SK-N-SH (cell line): ENCODE measurements at regions of chr11 and their contacts with region 1.

Region 1: DNA sequence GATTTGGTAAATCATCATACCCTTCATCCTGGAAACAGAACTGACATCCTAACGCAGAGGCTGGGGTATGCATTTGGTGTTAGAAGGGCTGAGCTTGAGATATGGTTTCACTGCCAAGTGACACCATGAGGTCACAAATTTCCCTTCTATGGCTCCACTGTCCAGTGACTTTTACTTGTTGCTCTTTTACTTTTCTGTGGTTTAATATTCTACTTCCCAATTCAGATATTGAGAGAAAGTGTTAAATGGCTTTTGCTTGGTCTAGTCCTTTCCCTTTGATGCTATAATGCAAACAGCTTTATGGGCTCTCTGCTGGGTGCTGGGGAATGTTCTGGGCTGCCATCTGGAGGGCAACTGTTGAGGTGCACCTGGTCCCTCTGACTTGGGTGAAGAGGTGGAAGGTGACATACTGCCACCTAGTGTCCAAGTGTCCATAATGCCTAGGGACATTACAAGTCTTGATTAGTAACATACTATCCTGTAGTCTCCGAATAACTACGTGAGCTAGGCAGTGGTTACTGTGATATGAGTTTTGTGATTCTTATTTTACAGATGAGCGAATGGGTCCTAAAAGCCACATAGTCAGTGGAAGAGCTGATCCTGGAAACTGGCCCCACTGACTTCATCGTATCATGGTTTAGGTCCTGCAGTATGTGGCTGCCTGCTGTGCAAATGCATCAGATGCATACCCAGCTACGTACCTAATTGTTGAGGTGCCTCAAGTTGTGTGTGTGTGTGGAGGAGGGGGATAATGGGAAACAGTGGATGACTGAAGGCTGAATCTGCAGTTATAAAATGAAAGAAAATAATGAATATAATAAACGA is 149.1 kb upstream of the RAG2 start:
- DNase-seq: peak; percentile 76
- H3K4me3 ChIP-seq: peak overlapping the region in 1 of 2 experiments; percentile 39; a peak in 1 of 4 replicates
- H3K27ac ChIP-seq: peak overlapping the region in 1 of 2 experiments; percentile 67; a peak in 2 of 4 replicates
- H3K4me1 ChIP-seq: peaks cover 13 to 18% of the 10 kb centered on the region in 2 experiments
- H3K27me3 ChIP-seq: no peaks in the 10 kb centered on the region
- CTCF ChIP-seq: peak; percentile 99
- EP300 ChIP-seq: no peak
- RAD21 ChIP-seq: peak; percentile 97

Region 2: GRCh38 chr11:36583667-36584066 is 163.4 kb before region 1 on chr11:
- CTCF ChIA-PET with region 1: interaction called, 13 read pairs
- POLR2A ChIA-PET with region 1: no interaction called
- DNase-seq: no peak
- H3K4me3 ChIP-seq: no peak overlapping the region
- H3K27ac ChIP-seq: no peak overlapping the region
- H3K4me1 ChIP-seq: peaks cover 6 to 8% of the 10 kb centered on the region in 2 experiments; a peak in 3 of 4 replicates
- H3K27me3 ChIP-seq: no peaks in the 10 kb centered on the region
- CTCF ChIP-seq: no peak
- EP300 ChIP-seq: no peak
- RAD21 ChIP-seq: no peak

Region 3: DNA sequence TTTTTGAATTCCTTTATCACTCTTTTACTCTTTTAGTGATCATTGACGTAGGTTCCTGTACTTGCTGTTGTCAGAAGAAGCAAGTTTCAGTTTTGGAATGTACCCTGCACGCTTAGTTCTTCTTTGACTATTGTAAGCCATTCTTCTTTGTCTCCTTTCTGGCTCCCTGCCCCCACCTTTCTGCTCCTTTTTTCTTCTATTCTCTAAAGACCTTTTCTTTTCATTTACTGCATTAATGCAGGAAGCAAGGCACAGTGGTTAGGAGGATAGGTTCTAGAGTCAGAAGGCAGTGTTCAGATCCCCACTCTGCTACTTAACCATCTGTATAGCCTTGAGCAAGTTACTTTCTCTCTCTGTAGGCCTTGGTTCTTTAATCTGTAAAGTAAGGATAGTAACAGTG is 115.3 kb before region 1 on chr11:
- CTCF ChIA-PET with region 1: interaction called, 19 read pairs
- POLR2A ChIA-PET with region 1: no interaction called
- DNase-seq: no peak
- H3K4me3 ChIP-seq: no peak overlapping the region
- H3K27ac ChIP-seq: peak overlapping the region in 1 of 2 experiments; percentile 99; a peak in 2 of 4 replicates
- H3K4me1 ChIP-seq: peaks cover 0 to 37% of the 10 kb centered on the region in 2 experiments; a peak in 2 of 4 replicates
- H3K27me3 ChIP-seq: no peaks in the 10 kb centered on the region
- CTCF ChIP-seq: no peak
- EP300 ChIP-seq: no peak
- RAD21 ChIP-seq: no peak

Region 4: DNA sequence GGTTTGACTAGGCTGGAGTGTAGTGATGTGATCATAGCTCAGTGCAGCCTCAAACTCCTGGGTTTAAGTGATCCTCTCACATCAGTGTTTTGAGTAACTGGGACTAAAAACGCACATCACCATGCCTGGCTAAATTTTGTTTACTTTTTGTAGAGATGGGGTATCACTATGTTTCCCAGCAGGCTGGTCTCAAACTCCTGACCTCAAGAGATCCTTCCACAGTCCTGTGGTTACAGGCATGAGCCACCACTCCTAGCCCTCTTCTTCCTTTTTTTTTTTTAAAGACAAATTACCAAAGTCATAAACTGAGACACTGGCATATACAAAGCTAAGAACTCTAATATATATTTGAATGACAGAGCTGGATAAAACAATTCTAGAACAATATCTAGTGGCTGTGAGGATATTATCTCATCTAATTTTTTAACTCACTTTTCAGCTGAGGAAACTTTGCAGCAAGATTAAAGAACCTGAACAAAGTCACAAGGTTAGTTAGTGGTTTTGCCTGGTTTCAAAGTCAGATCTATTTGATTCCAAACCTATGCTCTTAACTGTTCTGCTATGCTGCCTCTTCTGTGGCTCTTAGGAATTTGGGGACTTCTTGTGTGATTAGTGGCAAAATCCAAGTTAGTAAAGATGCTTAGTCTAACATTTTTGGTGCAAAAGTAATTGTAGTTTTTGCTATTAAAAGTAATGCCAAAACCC is 53.8 kb before region 1 on chr11:
- CTCF ChIA-PET with region 1: interaction called, 290 read pairs
- POLR2A ChIA-PET with region 1: no interaction called
- DNase-seq: no peak
- H3K4me3 ChIP-seq: no peak overlapping the region
- H3K27ac ChIP-seq: no peak overlapping the region
- H3K4me1 ChIP-seq: no peaks in the 10 kb centered on the region; a peak in 1 of 4 replicates
- H3K27me3 ChIP-seq: peaks cover 5% of the 10 kb centered on the region
- CTCF ChIP-seq: no peak
- EP300 ChIP-seq: no peak
- RAD21 ChIP-seq: no peak

Region 5: DNA sequence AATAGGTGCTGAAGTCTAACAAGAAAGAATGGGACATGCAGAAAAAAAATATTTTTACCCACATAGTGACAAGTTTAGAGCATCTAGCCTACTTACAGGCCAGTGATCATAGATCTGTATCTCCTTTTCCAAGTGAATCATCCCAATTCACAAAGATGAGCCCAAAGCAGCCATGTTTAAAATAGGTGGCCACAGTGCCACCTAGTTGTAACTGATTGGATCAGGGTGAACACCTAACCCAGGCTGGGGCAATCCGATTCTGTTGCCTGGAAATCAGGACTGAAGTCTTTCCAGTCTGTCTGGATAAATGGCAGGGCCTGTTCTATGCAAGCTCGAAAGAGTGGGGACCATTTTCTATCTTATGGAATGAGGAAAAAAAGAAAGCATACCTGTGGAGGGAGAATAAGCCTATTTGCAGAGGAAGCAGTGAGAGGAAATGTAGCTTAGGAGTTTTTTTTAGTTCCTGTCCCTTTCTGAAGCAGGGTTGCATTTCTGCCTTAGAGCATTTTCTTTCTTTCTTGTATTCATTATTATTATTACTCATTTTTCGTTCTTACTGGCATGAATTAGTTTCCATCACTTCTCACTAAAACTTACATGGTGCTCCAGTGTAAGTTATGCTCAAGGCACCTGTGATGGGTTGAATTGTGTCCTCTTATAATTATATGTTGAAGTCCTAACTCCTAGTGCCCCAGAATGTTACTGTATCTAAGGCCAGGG is 35.8 kb before region 1 on chr11:
- CTCF ChIA-PET with region 1: interaction called, 84 read pairs
- POLR2A ChIA-PET with region 1: no interaction called
- DNase-seq: no peak
- H3K4me3 ChIP-seq: no peak overlapping the region
- H3K27ac ChIP-seq: no peak overlapping the region
- H3K4me1 ChIP-seq: no peaks in the 10 kb centered on the region; a peak in 1 of 4 replicates
- H3K27me3 ChIP-seq: no peaks in the 10 kb centered on the region; the same call in 1 of the 2 replicates
- CTCF ChIP-seq: peak; percentile 15; the same call in 1 of the 2 replicates
- EP300 ChIP-seq: no peak
- RAD21 ChIP-seq: no peak

Region 6: GRCh38 chr11:36729825-36730224 is 17.3 kb before region 1 on chr11:
- CTCF ChIA-PET with region 1: interaction called, 26 read pairs
- POLR2A ChIA-PET with region 1: no interaction called
- DNase-seq: no peak
- H3K4me3 ChIP-seq: no peak overlapping the region
- H3K27ac ChIP-seq: no peak overlapping the region
- H3K4me1 ChIP-seq: no peaks in the 10 kb centered on the region
- H3K27me3 ChIP-seq: no peaks in the 10 kb centered on the region; the same call in 1 of the 2 replicates
- CTCF ChIP-seq: no peak
- EP300 ChIP-seq: no peak
- RAD21 ChIP-seq: no peak